Vagina (tissue), 2 donors: ENCODE measurements at regions of chr1 and their contacts with region 1.

Region 1: DNA sequence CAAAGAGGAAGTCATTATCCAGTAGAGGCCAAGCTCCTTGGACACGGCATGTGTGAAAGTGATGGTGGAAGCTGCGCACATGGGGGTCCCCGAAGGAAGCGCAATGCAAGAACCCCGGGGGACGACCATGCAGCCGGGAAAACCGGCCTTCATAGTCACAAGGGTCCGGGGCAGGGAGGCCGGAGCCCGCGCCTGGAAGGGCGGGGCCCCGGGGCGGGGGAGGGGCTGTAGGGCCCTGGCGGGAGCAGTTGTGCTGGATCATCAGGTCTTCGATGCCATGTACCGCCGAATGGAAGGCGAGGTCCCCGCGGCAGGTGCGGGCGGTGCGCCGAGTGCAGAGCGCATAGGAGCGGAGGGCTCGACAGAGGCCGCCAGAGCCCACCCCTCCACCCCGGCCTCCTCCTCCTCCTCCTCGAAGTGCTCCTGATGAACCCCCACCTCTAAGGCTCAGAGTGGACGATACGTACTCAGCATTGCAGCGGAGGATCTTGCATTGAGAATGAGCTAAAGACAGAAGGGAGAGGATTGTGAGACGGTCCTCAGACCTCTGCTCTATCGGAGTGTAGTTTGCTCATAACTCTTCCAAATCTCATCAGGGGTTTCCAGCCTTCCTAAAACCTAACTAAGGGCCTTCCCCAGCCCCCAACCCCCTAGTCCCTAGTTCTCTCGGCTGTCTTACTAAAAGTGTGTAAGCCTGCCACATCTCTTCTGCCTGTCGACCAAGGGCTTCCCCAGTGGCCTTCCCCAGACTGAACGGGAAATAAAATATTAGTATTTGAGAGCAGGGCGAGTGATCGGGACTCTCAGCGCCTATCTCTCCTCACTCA is 2.1 kb downstream of the HJV start:
- DNase-seq: no peak
- H3K4me3 ChIP-seq: peak overlapping the region; percentile 15 to 21
- H3K27ac ChIP-seq: no peak overlapping the region
- H3K4me1 ChIP-seq: peaks cover 10% of the 10 kb centered on the region
- H3K27me3 ChIP-seq: no peaks in the 10 kb centered on the region
- CTCF ChIP-seq: no peak
- POLR2A ChIP-seq: no peak

Region 2: DNA sequence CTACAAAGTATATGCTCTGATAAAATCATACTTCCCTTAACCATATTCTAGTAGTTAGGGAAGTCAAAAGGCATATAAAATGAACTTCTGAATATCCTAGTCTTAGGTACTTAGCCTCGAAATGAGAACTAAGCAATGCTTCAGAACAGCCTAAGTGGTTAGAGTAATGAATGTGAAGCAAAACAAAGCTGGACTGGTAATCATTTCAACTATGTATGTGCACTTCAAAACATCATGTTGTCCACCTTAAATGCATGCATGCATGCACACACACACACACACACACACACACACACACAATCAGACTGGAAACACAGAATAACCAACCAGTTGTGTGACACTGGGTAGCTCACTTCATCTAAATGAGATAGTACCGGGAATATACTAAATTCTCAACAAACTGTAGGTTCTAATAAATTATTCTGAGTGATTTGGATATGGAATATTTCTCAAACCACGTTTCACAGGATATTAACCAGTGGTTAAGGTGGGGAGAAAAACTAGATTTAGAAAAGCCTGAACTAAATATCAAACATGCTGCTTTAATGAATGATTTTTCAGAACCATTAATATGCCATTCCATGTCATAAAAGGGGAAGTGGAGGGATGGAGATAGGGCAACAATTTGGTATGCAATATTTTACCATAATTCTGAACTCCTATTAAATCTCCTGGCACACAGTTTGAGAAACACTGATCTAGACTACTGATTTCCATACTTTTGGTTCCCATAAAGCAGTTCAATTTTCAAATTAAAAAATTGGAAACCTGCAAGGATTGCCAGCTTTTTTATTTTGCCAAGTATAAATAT is 215.0 kb before region 1 on chr1:
- intact Hi-C with region 1: no loop called
- DNase-seq: no peak
- H3K4me3 ChIP-seq: no peak overlapping the region
- H3K27ac ChIP-seq: no peak overlapping the region
- H3K4me1 ChIP-seq: peaks cover 55% of the 10 kb centered on the region
- H3K27me3 ChIP-seq: no peaks in the 10 kb centered on the region
- CTCF ChIP-seq: no peak
- POLR2A ChIP-seq: no peak

Region 3: DNA sequence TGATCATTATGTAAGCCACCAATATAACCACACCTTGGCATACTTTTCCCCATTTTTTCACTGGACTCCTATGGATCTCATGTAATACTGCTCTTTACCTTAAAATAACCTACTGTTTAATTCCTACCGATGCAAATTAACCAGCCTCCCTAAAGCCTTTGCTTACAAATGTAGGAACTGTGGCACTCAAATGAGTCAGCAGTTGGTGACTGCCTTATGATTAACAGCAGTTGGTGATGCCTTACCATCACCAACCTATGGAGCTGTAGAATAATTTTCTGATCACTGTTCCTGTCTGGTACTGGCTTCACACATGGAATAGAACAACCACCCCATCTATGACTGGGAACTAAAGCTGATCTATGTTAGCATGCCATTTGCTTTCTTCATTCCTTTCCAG is 181.8 kb before region 1 on chr1:
- intact Hi-C with region 1: loop called (anchors 5 kb)
- DNase-seq: no peak
- H3K4me3 ChIP-seq: no peak overlapping the region
- H3K27ac ChIP-seq: no peak overlapping the region
- H3K4me1 ChIP-seq: no peaks in the 10 kb centered on the region
- H3K27me3 ChIP-seq: no peaks in the 10 kb centered on the region
- CTCF ChIP-seq: no peak
- POLR2A ChIP-seq: no peak

Region 4: DNA sequence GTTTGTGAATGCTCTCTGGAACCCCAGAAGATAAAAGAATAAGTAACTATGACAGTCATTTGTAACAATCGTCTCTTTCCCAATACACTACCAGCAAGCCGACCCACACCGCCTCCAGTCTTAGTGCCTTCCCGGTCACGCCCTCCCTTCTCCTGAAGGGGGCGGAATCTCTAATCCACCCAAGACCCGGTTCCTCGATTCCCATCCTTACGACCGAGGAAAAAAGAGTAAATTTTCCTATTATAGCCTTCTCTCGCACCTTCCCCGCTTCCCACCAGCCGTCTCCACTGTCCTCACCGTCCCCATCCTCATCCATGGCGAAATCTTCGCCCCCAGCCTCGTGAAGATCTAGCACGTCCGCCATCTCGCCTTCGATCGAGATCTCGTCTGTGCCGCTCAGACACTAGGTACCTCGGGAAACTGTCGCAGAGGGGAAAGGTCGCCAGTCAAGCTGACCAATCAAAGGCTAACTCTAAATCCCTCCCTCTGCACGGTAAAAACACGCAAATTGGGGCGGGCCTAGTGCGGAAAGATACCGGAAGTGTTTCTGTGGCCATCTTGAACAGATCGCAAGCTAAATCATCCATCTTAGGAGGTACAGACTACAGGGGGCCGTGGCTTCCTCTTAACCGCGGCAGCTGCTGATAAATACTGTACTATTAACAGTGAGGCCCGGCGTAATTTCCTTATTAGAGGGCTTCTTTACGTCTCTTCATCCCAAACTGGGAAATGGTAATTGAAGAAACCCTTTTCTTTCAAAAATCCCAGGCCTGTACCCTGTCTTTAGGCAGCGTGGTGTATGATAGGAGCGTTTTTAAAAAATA is 92.2 kb before region 1 on chr1 and contains the start of gene RBM8A:
- intact Hi-C with region 1: no loop called
- DNase-seq: peak in 1 of 2 donors; percentile 99
- H3K4me3 ChIP-seq: peak within 1 kb of the TSS; percentile 75 to 78
- H3K27ac ChIP-seq: peak within 1 kb of the TSS; percentile 92
- H3K4me1 ChIP-seq: peaks cover 25% of the 10 kb centered on the region
- H3K27me3 ChIP-seq: no peaks in the 10 kb centered on the region
- CTCF ChIP-seq: peak; percentile 47 to 74 (median 66)
- POLR2A ChIP-seq: peak in 1 of 2 donors; percentile 95
- total RNA-seq, gene RBM8A: 93.3 TPM